ENCODE measurements at regions of chr10 and their contacts with region 1.

Region 1: DNA sequence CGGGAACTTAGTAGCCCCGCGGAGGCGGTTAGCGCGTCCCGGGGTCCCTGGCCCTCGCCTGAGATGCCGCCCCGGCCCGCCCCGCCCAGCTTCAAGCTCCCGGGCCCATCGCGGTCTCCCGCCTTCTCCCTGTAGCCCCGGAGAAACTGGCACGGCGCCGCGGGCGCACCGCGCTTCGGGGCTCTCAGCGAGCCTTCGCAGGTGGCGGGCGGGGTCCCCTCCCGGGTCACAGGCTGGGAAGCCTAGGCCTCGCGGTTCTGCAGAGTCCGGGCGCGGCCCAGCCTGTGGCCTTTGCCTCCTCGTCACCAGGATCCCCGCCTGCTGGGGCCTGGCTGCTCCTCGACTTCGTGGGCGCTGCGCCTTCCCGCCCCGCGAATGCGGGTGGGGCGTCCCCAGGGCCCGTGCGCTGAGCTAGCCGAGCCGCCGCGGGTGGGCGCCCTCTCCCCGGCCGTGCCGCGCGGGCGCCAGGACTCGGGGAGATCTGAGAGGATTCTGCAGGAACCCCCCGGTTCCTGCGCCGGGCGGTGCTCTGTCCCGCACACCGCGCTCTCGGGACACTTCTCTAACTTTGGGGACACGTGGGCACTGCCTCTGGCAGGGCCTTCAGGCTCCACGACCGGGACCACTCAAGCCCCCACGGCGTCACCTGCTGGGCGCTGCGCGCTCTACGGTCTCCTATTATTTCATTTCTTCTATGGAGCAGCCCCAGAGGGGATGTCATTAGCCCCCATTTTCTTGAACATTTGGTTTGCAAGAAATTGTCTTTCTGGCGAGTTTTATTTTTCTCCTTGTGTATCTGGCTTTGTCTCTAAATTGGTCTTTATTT is 682 bp upstream of the RGS10 start:
- DNase-seq: peak; percentile 83
- H3K4me3 Mint-ChIP-seq: peak overlapping the region; percentile 84
- H3K27ac Mint-ChIP-seq: peak overlapping the region; percentile 88
- H3K4me1 Mint-ChIP-seq: peaks cover 25% of the 10 kb centered on the region
- H3K27me3 Mint-ChIP-seq: no peaks in the 10 kb centered on the region

Region 2: DNA sequence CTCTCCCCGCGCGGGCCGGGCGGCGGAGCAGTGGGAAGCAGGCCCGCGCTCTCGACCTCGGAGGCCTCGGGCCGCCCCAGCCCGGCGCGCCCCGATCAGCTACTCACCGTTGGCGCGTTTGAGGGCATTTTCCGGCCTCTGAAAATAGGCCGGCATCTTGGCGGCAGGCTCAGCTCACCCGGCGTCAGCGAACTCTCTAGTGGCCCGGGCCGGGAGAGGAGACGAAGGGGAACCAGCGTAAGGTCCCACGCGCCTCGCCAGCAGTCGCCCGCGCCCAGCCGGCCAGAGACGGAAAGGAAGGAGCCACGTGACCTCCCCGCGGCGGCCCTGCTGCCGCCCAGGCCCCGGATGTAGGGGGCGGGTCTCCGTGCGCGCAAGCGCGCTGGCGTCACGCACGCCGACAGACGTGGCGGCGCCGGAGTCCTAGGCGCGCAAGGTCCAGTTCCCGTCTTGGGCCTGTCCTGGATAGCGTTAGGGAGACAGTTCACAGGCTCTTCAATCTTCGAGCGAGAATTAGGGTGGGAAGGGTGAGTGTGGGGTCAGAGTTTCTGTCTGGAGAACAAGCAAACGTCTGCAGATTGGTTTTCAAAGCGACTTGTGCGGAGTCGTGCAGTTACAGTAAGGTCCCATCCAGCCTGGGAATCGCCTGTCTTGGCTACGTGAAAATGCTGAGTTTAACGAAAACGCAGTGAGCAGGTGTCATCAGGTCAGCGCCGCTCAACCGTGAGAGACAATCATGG is 462.5 kb before region 1 on chr10 and contains the start of gene EIF3A:
- CTCF ChIA-PET with region 1: no interaction called
- intact Hi-C with region 1: loop called (anchors 2 kb)
- DNase-seq: peak; percentile 90
- H3K4me3 Mint-ChIP-seq: peak within 1 kb of the TSS; percentile 95
- H3K27ac Mint-ChIP-seq: peak within 1 kb of the TSS; percentile 98
- H3K4me1 Mint-ChIP-seq: peaks cover 33% of the 10 kb centered on the region
- H3K27me3 Mint-ChIP-seq: no peaks in the 10 kb centered on the region
- total RNA-seq, gene EIF3A: 113 to 120 TPM

Region 3: GRCh38 chr10:119478111-119478802 is 64.9 kb before region 1 on chr10:
- CTCF ChIA-PET with region 1: no interaction called
- intact Hi-C with region 1: loop called (anchors 1 kb)
- DNase-seq: peak; percentile 76
- H3K4me3 Mint-ChIP-seq: peak overlapping the region; percentile 37
- H3K27ac Mint-ChIP-seq: peak overlapping the region; percentile 14
- H3K4me1 Mint-ChIP-seq: peaks cover 29% of the 10 kb centered on the region
- H3K27me3 Mint-ChIP-seq: no peaks in the 10 kb centered on the region

Region 4: GRCh38 chr10:119502209-119502608 is 41.0 kb before region 1 on chr10:
- CTCF ChIA-PET with region 1: interaction called, 13 read pairs
- intact Hi-C with region 1: loop called (anchors 1 kb)
- DNase-seq: peak; percentile 93
- H3K4me3 Mint-ChIP-seq: peak overlapping the region; percentile 47
- H3K27ac Mint-ChIP-seq: peak overlapping the region; percentile 99
- H3K4me1 Mint-ChIP-seq: peaks cover 98% of the 10 kb centered on the region
- H3K27me3 Mint-ChIP-seq: no peaks in the 10 kb centered on the region

Region 5: GRCh38 chr10:119596537-119597404 is 53.6 kb after region 1 on chr10 and contains the start of gene TIAL1:
- CTCF ChIA-PET with region 1: interaction called, 9 read pairs
- intact Hi-C with region 1: loop called (anchors 1 kb)
- DNase-seq: peak; percentile 98
- H3K4me3 Mint-ChIP-seq: peak within 1 kb of the TSS; percentile 93
- H3K27ac Mint-ChIP-seq: peak within 1 kb of the TSS; percentile 98
- H3K4me1 Mint-ChIP-seq: peaks cover 47% of the 10 kb centered on the region
- H3K27me3 Mint-ChIP-seq: no peaks in the 10 kb centered on the region
- total RNA-seq, gene TIAL1: 184 to 192 TPM

Region 6: GRCh38 chr10:119725828-119726675 is 182.9 kb after region 1 on chr10 and contains the start of gene INPP5F:
- CTCF ChIA-PET with region 1: no interaction called
- intact Hi-C with region 1: loop called (anchors 5 kb)
- DNase-seq: peak; percentile 100
- H3K4me3 Mint-ChIP-seq: peak within 1 kb of the TSS; percentile 88
- H3K27ac Mint-ChIP-seq: peak within 1 kb of the TSS; percentile 78
- H3K4me1 Mint-ChIP-seq: peaks cover 41% of the 10 kb centered on the region
- H3K27me3 Mint-ChIP-seq: no peaks in the 10 kb centered on the region
- total RNA-seq, gene INPP5F: 10.5 to 10.9 TPM

Region 7: DNA sequence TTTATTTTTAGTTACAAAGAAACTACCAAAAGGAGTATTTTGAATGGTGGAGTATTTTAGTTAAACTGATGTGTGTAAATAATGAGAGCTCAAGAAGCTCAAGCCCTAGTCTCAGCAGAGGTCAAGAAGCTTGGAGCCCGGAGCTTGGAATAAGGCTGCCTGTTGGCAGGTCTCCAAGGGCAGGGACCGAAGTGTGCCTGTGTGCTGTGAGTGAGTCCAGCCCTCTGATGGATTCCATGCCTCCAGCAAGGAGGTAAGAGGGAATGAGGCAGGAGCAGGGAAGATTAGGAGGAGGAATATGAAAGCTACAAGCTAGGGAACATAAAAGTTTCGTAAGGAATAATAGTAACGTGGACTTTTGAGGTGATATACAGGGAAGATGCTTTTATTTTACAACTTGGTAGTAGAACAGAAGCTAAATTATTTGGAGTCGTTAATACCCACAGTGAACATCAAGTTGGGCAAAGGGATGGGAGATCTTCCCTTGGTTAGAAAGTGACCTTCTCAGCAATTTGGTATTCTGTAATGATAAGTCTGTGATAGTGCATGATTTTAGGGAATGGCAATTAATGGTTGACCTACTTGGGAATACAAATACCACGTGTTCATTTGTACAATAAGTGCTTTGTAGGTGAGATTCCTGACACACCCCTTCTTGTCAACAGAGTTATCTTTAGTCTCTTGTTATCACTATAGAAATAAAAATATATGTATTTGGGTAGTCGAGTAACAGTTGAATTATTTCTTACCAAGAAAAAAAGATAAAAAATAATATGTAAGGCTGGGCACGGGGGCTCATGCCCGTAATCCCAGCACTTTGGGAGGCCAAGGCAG is 354.0 kb after region 1 on chr10:
- CTCF ChIA-PET with region 1: no interaction called
- intact Hi-C with region 1: no loop called
- DNase-seq: no peak
- H3K4me3 Mint-ChIP-seq: no peak overlapping the region
- H3K27ac Mint-ChIP-seq: no peak overlapping the region
- H3K4me1 Mint-ChIP-seq: peaks cover 59% of the 10 kb centered on the region
- H3K27me3 Mint-ChIP-seq: no peaks in the 10 kb centered on the region